ENCODE measurements at regions of chr15 and their contacts with region 1.

Region 1: DNA sequence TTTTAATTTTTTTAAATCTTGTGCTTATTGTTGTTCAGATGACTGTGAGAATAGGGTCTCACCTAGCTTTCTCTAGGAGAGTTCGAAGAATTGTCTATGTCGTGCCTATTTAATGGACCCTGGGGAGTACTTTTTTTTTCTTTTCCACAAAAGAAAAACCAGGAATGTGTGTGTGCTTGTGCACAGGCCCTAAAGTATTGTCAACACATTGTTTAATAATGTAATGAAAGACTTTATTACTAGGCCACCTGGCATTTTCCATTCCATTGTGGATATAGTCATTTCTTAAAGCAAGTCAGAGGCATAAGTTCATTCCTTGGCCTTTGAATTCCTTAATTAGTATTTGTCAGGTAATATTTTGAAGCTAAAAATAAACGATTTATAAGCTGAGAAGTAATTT is 135.9 kb downstream of the KLHL25 start:
- DNase-seq: no peak
- H3K4me3 ChIP-seq: no peak overlapping the region
- H3K27ac ChIP-seq: no peak overlapping the region
- H3K4me1 ChIP-seq: no peaks in the 10 kb centered on the region
- H3K27me3 ChIP-seq: no peaks in the 10 kb centered on the region
- CTCF ChIP-seq: no peak
- POLR2A ChIP-seq: no peak

Region 2: GRCh38 chr15:85527895-85528294 is 130.9 kb before region 1 on chr15:
- CTCF ChIA-PET with region 1: no interaction called
- POLR2A ChIA-PET with region 1: interaction called, 10 read pairs
- dilution Hi-C with region 1: no loop called
- intact Hi-C with region 1: no loop called
- DNase-seq: peak; percentile 86
- H3K4me3 ChIP-seq: no peak overlapping the region
- H3K27ac ChIP-seq: peak overlapping the region; percentile 59
- H3K4me1 ChIP-seq: peaks cover 13% of the 10 kb centered on the region
- H3K27me3 ChIP-seq: no peaks in the 10 kb centered on the region
- CTCF ChIP-seq: no peak
- POLR2A ChIP-seq: no peak